GM12878 (cell line): ENCODE measurements at regions of chr11 and their contacts with region 1.

Region 1: DNA sequence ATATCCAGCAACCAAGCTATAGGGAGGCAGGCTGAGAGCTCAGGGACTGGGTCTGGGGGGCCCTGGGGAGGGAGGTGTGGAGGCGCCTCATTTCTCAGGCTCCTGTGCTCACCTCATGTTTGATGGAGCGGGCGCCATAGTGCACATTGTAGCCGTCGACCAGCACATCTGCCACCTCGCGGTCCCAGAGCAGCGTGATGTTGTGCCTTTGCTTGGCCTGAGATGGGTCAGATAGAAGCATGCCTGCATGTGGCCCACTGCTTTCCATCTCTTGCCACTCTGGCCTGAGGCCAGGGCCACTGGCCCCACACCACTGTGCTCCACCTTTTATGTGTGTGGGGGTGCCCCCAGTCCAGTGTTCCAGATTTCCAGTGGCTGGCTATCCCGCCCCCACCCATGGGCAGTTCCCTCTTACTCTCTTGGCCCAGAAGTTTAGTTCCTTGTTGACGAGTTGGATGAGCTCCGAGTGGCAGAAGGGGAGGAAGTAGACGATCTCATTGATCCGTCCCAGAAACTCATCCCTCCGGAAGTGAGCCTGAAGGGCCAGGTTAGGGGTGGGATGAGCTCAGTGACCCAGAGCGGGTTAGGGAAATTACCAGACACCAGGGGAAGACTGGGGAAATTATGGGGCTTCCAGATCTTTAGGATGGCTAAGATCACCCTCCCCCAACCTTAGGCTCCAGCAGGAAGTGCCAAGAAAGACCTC is 50.1 kb upstream of the PHOX2A start:
- DNase-seq: no peak
- ATAC-seq: no peak
- H3K4me3 ChIP-seq: no peak overlapping the region
- H3K27ac ChIP-seq: no peak overlapping the region
- H3K4me1 ChIP-seq: no peaks in the 10 kb centered on the region
- H3K27me3 ChIP-seq: no peaks in the 10 kb centered on the region
- CTCF ChIP-seq: no peak
- EP300 ChIP-seq: no peak
- POLR2A ChIP-seq: no peak
- RAD21 ChIP-seq: no peak

Region 2: DNA sequence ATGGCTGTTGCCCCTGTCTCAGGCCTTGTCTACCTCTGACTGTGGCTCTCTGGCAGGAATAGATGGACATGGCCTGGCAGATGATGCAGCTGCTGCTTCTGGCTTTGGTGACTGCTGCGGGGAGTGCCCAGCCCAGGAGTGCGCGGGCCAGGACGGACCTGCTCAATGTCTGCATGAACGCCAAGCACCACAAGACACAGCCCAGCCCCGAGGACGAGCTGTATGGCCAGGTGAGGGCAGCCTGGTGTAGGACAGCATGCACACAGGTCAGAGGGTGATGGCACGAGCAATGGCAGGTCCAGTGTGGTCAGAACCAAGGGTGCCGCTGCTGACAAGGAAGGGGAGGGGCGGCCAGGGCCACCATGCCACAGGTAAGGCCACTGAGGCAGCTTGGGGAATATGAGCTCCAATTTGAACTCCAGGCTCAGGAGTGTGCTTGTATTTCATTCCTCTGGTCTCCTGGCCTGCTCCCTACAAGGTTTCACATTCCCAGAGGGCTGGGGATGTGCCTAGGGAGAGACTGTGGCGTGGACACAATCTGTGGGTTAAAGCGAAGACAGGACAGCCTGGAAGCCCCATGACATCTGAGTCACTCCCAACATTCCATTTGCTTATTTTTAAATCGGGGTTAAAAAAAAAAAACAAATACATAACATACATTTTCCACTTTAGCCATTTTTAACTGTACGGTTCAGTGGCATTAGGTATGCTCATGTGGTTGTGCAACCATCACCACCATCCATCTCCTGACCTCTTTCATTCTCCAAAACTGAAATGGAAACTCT is 158.0 kb before region 1 on chr11:
- CTCF ChIA-PET with region 1: no interaction called
- POLR2A ChIA-PET with region 1: no interaction called
- RAD21 ChIA-PET with region 1: no interaction called
- SMC1A ChIA-PET with region 1: no interaction called
- in situ Hi-C with region 1: no loop called
- intact Hi-C with region 1: no loop called
- DNase-seq: no peak
- ATAC-seq: no peak
- H3K4me3 ChIP-seq: no peak overlapping the region
- H3K27ac ChIP-seq: no peak overlapping the region
- H3K4me1 ChIP-seq: no peaks in the 10 kb centered on the region
- H3K27me3 ChIP-seq: no peaks in the 10 kb centered on the region
- CTCF ChIP-seq: no peak
- EP300 ChIP-seq: no peak
- POLR2A ChIP-seq: no peak
- RAD21 ChIP-seq: no peak

Region 3: DNA sequence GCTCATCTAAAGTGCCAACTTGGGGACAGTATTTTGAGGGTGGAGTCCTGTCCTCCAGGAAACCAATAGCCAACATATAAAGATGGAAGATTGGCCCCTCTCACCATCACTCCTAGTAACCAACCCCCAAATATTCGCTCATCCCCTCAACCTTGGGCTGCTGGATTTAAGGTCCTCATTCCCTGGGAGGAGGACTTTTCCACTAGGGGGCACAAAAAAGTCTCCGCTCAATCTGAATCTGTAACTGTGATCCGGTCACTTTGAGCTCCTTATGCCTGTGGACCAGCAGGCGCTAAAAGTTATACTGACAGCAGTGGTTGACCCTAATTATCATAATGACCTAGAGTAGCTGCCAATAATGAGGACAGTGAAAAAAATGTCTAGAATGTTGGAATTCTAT is 160.7 kb after region 1 on chr11:
- CTCF ChIA-PET with region 1: no interaction called
- POLR2A ChIA-PET with region 1: interaction called, 12 read pairs
- RAD21 ChIA-PET with region 1: no interaction called
- SMC1A ChIA-PET with region 1: no interaction called
- in situ Hi-C with region 1: no loop called
- intact Hi-C with region 1: no loop called
- DNase-seq: no peak
- ATAC-seq: no peak
- H3K4me3 ChIP-seq: no peak overlapping the region
- H3K27ac ChIP-seq: no peak overlapping the region
- H3K4me1 ChIP-seq: no peaks in the 10 kb centered on the region
- H3K27me3 ChIP-seq: no peaks in the 10 kb centered on the region
- CTCF ChIP-seq: no peak
- EP300 ChIP-seq: no peak
- POLR2A ChIP-seq: no peak
- RAD21 ChIP-seq: no peak